Common myeloid progenitor, CD34-positive (primary cell): ENCODE measurements at regions of chr3 and their contacts with region 1.

Region 1: DNA sequence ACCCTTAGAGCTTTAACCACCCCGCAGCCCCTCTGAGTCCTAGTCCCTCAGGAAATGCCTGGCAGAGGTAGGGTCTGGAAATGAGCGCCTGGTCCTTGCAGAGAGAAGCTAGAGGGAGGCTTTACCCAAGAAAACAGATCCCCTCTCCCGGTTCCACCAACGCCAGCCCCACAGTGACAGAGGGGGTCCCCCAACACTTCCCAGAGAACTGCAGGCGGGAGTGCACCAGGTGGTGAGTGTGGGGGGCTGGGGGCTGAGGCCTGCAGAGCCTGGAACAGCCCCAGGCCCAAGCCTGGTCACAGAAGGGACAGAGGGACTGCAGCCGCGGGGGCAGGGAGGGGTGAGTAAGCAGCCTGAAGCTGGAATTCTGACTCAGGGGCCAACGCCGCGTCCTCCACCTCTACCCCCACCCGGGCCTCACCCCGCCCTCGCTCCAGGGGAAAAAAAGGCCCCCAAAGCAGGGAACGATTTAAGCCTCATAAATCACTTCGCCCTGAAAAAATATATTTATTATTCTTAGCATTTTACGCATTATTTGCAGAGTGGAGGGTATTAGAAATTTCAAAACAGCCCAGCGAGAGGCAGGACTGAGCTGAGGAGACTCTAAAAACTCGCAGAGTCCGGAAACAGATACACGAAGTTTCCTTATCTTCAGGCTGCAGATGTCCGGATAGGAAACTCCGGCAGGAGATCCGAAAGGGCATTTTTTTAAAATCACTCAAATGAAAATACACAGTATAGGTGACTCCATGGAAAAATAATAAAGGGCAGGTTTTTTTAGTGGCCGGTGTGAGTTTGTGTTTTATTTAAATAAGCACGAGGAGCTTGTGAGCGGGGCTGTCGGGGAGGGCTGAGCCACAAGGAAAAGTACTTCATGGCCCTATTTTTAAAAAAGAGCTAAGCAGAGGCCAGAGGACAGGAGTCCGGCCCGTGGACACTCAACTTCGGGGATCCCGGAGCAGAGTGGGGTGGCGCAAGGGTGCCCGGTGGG is 10.0 kb downstream of the GATA2 start:
- DNase-seq: peak; percentile 98 to 99 (median 99)
- H3K4me3 ChIP-seq: peak overlapping the region in 6 of 7 experiments; percentile 54 to 98 (median 88)
- H3K27ac ChIP-seq: peak overlapping the region; percentile 83 to 93
- H3K4me1 ChIP-seq: peaks cover 6 to 74% (median 67%) of the 10 kb centered on the region in 4 experiments
- H3K27me3 ChIP-seq: no peaks in the 10 kb centered on the region

Region 2: DNA sequence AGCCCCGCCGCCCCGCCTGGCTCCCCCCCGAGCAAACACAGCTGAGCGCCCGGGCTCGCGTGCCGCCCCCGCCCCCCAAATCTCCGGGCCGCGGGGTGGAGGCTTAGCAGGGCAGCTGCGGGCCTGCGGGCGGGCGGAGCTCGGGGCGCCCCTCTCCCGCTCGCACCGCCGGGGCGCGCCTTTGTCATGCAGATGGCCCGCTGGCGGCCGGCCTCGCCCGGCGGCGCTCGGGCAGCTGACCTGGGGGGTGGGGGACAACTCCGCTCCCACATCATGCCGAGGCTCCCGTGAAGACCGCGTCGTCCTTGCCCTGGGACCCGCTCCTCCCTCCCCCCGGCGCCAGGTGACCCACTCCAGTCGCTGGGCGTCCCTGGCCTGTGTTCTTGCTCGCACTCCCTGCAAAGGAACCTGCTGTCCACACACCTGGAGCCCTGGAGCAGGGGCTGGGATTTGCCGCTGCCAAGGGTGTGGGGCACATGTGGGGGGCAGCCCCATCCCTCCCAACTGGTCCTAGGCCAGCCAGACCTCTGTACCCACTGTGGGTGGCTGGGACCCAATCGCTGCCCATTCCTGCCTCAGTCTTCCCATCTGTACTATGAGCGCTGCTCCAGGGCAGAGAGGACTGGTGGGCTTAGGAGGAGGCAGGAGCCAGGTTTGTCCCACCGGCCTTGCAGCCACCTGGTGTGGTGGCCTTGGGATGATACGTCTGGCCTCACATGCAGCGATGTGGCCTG is 49.8 kb before region 1 on chr3:
- CTCF ChIA-PET with region 1: interaction called, 33 read pairs
- POLR2A ChIA-PET with region 1: interaction called, 3 read pairs
- DNase-seq: peak in 2 of 3 donors; percentile 33 to 54
- H3K4me3 ChIP-seq: peak overlapping the region in 6 of 7 experiments; percentile 2 to 63 (median 43)
- H3K27ac ChIP-seq: no peak overlapping the region
- H3K4me1 ChIP-seq: peaks cover 0 to 13% (median 9%) of the 10 kb centered on the region in 4 experiments
- H3K27me3 ChIP-seq: peaks cover 0 to 32% (median 11%) of the 10 kb centered on the region in 5 experiments

Region 3: GRCh38 chr3:128497387-128498126 is 14.6 kb after region 1 on chr3:
- CTCF ChIA-PET with region 1: interaction called, 29 read pairs
- POLR2A ChIA-PET with region 1: interaction called, 15 read pairs
- DNase-seq: peak; percentile 72 to 86 (median 83)
- H3K4me3 ChIP-seq: peak overlapping the region; percentile 33 to 82 (median 60)
- H3K27ac ChIP-seq: peak overlapping the region in 1 of 2 experiments; percentile 25
- H3K4me1 ChIP-seq: peaks cover 2 to 50% (median 30%) of the 10 kb centered on the region in 4 experiments
- H3K27me3 ChIP-seq: peaks cover 0 to 2% (median 0%) of the 10 kb centered on the region in 5 experiments

Region 4: DNA sequence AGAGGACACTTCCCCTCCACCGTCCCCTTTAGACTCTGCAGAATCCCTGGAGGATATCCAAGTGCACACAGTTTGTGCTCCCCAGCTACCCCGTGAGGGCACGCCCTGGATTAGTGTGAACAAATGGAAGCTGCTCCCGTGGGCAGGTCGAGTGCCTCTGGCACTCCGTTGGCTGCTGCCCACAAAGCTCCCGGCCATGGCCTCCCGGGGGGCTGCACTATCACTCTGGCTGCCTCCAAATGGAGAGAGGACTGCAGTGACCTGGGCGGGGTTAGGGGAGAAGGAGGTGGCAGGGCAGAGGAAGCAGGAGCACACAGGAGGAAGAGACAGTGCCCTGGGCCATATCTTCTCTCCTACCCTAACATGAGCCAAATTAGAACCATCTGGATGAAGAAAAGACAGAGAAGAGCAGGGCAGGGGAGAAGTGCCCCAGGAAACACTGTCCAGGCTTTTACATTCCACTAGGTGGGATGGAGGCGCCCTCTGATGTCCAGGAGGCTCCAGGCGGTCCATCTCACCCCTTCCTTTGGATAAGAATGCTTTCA is 367.0 kb after region 1 on chr3:
- CTCF ChIA-PET with region 1: no interaction called
- POLR2A ChIA-PET with region 1: no interaction called
- DNase-seq: no peak
- H3K4me3 ChIP-seq: no peak overlapping the region
- H3K27ac ChIP-seq: no peak overlapping the region
- H3K4me1 ChIP-seq: peaks cover 0 to 48% (median 28%) of the 10 kb centered on the region in 4 experiments
- H3K27me3 ChIP-seq: no peaks in the 10 kb centered on the region